Endothelial cell of umbilical vein (primary cell): ENCODE measurements at regions of chr3 and their contacts with region 1.

Region 1: DNA sequence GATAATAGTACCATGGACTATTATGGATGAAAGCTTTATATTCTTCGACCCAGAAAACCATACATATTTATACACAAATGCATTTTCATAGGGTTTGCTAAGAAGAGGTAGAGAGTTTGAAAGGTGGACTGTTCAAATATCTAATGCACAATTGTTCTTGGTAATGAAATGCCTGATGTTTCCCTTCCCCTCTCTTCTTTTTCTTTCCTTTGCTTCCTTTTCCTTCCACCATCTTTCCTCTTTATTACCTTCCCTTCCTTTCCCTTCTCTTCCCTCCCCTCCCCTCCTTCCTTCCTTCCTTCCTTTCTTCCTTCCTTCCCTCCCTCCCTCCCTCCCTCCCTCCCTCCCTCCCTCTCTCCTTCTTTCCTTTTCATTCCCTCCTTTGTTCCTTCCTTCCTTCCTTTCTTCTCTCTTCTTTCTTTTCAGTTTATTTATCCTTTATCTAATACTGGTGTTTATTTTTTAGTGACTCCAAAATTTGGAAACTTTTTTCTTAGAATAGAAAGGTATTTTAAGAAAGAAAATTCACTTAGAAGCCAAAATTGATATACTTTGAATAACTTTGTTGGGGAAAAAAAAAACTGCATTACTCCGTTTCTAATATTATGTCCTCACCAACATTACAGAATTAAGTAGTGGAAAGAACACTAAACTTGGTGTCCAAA is 22.7 kb upstream of the PYDC2 start:
- DNase-seq: no peak
- H3K4me3 ChIP-seq: no peak overlapping the region
- H3K27ac ChIP-seq: no peak overlapping the region
- H3K4me1 ChIP-seq: no peaks in the 10 kb centered on the region
- H3K27me3 ChIP-seq: peaks cover 2 to 5% of the 10 kb centered on the region in 2 experiments
- CTCF ChIP-seq: no peak
- POLR2A ChIP-seq: no peak

Region 2: DNA sequence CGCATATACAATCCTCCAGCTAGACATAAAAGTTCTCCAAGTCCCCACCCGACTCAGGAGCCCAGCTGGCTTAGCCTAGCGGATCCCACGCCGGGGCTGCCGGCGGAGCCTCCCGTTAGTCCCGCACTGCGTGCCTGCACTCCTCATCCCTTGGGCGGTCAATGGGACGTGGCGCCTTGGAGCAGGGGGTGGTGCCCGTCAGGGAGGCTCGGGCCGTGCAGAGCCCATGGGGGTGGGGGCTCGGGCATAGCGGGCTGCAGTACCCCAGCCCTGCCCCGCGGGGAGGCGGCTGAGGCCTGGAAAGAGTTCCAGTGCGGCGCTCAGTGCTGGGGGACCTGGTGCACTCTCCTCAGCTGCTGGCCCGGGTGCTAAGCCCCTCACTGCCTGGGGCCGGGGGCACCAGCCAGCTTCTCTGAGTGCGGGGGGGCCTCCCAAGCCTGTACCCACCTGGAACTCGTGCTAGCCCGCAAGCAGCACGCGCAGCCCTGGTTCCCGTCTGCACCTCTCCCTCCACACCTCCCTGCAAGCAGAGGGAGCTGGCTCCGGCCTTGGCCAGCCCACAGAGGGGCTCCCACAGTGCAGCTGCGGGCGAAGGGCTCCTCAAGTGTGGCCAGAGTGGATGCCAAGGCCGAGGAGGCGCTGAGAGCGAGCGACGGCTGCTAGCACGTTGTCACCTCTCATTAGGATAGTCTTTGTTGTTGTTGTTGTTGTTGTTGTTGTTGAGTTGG is 121.2 kb before region 1 on chr3:
- CTCF ChIA-PET with region 1: no interaction called
- POLR2A ChIA-PET with region 1: no interaction called
- dilution Hi-C with region 1: no loop called
- intact Hi-C with region 1: no loop called
- DNase-seq: no peak
- H3K4me3 ChIP-seq: no peak overlapping the region
- H3K27ac ChIP-seq: no peak overlapping the region
- H3K4me1 ChIP-seq: peaks cover 4% of the 10 kb centered on the region
- H3K27me3 ChIP-seq: no peaks in the 10 kb centered on the region
- CTCF ChIP-seq: no peak
- POLR2A ChIP-seq: no peak

Region 3: GRCh38 chr3:191484461-191484860 is 46.2 kb after region 1 on chr3:
- CTCF ChIA-PET with region 1: no interaction called
- POLR2A ChIA-PET with region 1: no interaction called
- dilution Hi-C with region 1: no loop called
- intact Hi-C with region 1: loop called (anchors 1 kb)
- DNase-seq: no peak
- H3K4me3 ChIP-seq: no peak overlapping the region
- H3K27ac ChIP-seq: no peak overlapping the region
- H3K4me1 ChIP-seq: no peaks in the 10 kb centered on the region
- H3K27me3 ChIP-seq: no peaks in the 10 kb centered on the region
- CTCF ChIP-seq: no peak
- POLR2A ChIP-seq: no peak